K562 (cell line): ENCODE measurements at regions of chr5 and their contacts with region 1.

Region 1: GRCh38 chr5:56838409-56839039 is 23.2 kb downstream of the MAP3K1 start:
- DNase-seq: peak in 1 of 4 experiments; percentile 33
- ATAC-seq: peak; percentile 56; the same call in 2 of the 3 replicates
- H3K4me3 ChIP-seq: no peak overlapping the region
- H3K27ac ChIP-seq: no peak overlapping the region
- H3K4me1 ChIP-seq: peaks cover 0 to 8% of the 10 kb centered on the region in 2 experiments; a peak in 1 of 5 replicates
- H3K27me3 ChIP-seq: no peaks in the 10 kb centered on the region
- CTCF ChIP-seq: peak; percentile 30 to 72 (median 54); a peak in 5 of 6 replicates
- EP300 ChIP-seq: no peak
- POLR2A ChIP-seq: no peak
- RAD21 ChIP-seq: peak; percentile 88 to 90

Region 2: GRCh38 chr5:55936100-55936693 is 902.3 kb before region 1 on chr5:
- CTCF ChIA-PET with region 1: interaction called, 9 read pairs
- POLR2A ChIA-PET with region 1: no interaction called
- in situ Hi-C with region 1: loop called (anchors 25 kb)
- intact Hi-C with region 1: loop called (anchors 2 kb)
- DNase-seq: peak; percentile 68 to 86 (median 73)
- ATAC-seq: peak; percentile 96
- H3K4me3 ChIP-seq: no peak overlapping the region
- H3K27ac ChIP-seq: no peak overlapping the region
- H3K4me1 ChIP-seq: no peaks in the 10 kb centered on the region; a peak in 1 of 5 replicates
- H3K27me3 ChIP-seq: no peaks in the 10 kb centered on the region
- CTCF ChIP-seq: peak; percentile 91 to 97 (median 97)
- EP300 ChIP-seq: no peak
- POLR2A ChIP-seq: no peak
- RAD21 ChIP-seq: peak; percentile 87

Region 3: DNA sequence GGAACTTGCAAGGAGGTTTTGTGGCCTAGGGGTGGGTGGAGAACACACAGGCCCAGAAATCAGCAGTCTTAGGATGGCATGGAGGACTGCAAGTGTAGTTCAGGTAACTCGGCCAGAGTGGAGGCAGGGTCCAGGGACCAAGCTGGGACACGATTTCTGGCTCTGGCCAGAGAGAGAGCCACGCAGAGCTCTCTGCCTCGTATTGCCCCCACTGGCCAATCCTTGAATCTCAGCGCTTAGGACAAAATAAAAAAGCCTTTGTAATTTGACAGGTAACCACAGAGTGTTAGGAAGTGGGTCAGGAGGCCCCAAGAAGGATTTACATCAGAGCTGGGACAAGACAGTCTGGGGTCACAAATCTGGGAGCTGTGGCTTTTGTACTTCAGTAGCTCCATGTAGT is 11.5 kb before region 1 on chr5:
- CTCF ChIA-PET with region 1: no interaction called
- POLR2A ChIA-PET with region 1: interaction called, 24 read pairs
- in situ Hi-C with region 1: no loop called
- intact Hi-C with region 1: no loop called
- DNase-seq: peak in 3 of 4 experiments; percentile 21 to 41 (median 29)
- ATAC-seq: peak; percentile 86
- H3K4me3 ChIP-seq: no peak overlapping the region
- H3K27ac ChIP-seq: no peak overlapping the region
- H3K4me1 ChIP-seq: peaks cover 10 to 21% of the 10 kb centered on the region in 2 experiments
- H3K27me3 ChIP-seq: no peaks in the 10 kb centered on the region
- CTCF ChIP-seq: peak; percentile 30 to 56 (median 52); a peak in 4 of 6 replicates
- EP300 ChIP-seq: no peak
- POLR2A ChIP-seq: no peak
- RAD21 ChIP-seq: 0 out of 4 replicates have a peak, but pooled peaks of 1 of the 2 experiments have one; percentile 17